Colonic mucosa (tissue), 4 donors: ENCODE measurements at regions of chr21 and their contacts with region 1.

Region 1: DNA sequence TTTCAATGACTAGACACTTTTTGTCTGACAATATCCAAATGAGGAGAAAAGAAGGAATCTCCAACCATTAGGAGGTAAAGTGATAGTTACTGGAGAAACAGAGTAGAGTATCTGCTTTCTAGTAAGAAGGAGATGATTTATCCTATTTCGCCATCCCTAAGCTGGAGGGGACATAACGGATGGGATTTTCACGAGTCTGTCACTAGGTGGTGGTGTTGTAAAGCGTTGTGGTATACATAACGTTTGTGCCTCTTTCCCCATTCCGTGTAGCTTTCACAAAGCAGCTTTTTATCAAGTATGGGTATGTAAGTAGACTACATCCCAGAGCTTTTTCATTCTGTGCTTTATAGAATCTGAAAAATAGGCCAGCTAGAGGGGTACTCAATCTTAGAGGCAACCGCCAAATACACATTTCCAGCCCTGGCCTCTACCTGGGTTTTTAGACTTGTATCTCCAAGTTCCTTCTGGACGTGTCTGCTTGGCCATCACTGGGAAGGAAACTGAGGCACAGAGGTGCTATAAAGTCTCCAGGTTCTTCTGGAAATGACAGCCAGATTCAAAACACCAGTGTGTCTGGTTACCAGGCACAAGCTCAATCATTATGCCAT is 33.3 kb upstream of the FAM3B start:
- DNase-seq: peak; percentile 64
- H3K4me3 ChIP-seq: no peak overlapping the region
- H3K27ac ChIP-seq: no peak overlapping the region
- H3K4me1 ChIP-seq: no peaks in the 10 kb centered on the region
- H3K27me3 ChIP-seq: no peaks in the 10 kb centered on the region
- CTCF ChIP-seq: peak; percentile 77

Region 2: DNA sequence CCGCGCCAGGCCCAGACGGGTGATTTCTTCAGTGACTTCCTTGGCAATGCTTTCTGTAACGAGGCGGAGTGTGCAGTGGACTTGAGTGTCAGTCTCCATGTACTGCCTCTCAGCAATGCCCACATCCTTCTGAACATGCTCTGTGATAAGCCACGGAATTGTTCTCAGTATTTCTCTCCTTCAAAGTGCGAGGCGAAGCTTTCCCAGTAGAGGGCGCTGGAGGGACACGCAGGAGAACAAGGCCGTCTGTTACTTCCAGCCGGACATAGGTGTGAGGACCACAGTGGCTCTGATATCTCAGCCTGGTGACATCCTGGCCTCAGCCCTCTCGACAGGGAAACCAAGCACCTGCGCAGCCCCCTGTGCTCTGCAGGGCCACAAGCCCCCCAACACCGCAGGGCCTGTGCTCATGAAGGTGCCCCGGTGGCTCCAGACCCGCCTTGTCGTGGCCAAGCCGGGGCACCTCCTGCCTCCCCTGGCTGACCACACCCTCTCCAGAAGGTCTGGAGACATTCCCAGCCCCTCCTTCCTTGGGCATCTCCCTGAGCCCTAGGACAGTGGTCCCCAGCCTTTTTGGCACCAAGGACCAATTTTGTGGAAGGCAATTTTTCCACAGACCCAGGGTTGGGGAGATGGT is 161.4 kb before region 1 on chr21:
- intact Hi-C with region 1: loop called (anchors 10 kb)
- DNase-seq: peak; percentile 93
- H3K4me3 ChIP-seq: no peak overlapping the region
- H3K27ac ChIP-seq: no peak overlapping the region
- H3K4me1 ChIP-seq: no peaks in the 10 kb centered on the region
- H3K27me3 ChIP-seq: peaks cover 4% of the 10 kb centered on the region
- CTCF ChIP-seq: peak; percentile 85

Region 3: DNA sequence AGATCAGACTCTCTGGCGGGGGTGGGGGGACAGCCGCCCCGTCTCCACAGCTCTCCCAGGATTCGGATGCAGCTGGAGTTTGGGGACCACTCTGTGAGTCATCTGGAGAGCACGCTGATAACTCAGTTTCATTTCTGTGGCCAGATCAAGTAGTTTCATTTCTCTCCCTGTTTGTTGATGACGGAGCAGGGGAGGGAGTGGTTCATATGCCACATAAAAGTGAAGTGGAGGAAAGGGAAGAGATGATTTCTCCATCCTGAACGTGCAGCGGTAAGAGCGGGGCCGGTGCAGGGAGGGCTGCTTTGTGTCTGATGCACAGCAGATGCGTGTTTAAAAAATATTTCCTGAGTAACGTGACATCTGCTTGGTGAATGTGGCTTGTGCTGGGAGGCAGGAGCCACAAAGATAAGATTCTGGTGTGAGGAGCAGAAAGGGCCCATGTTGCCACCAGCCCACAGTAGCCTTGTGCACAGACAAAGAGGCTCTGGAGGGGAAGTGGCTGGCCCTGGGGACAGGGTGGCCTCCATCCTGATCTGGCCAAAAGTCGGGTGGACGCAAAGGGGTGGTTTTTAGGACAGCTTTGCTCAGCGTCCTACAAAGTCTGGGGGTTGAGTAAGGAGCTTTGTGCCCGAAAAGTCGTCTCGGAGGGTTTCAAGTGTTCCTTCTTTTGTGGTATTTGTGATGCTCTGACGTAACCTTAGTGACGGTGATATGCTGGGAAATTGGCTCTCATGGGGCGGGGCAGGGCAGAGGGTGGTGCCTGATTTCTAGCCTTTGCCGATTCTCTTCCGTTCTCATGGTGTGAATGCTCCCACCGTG is 78.7 kb after region 1 on chr21 and contains the start of gene MX2:
- intact Hi-C with region 1: loop called (anchors 5 kb)
- DNase-seq: peak; percentile 61
- H3K4me3 ChIP-seq: peak within 1 kb of the TSS; percentile 27
- H3K27ac ChIP-seq: peak within 1 kb of the TSS; percentile 69
- H3K4me1 ChIP-seq: peaks cover 6% of the 10 kb centered on the region
- H3K27me3 ChIP-seq: no peaks in the 10 kb centered on the region
- CTCF ChIP-seq: no peak
- total RNA-seq, gene MX2: 2.0 to 2.5 TPM

Region 4: GRCh38 chr21:41396506-41397075 is 113.3 kb after region 1 on chr21:
- intact Hi-C with region 1: no loop called
- DNase-seq: peak; percentile 62
- H3K4me3 ChIP-seq: no peak overlapping the region
- H3K27ac ChIP-seq: no peak overlapping the region
- H3K4me1 ChIP-seq: peaks cover 4% of the 10 kb centered on the region
- H3K27me3 ChIP-seq: no peaks in the 10 kb centered on the region
- CTCF ChIP-seq: no peak

Region 5: GRCh38 chr21:41460578-41461527 is 177.5 kb after region 1 on chr21:
- intact Hi-C with region 1: loop called (anchors 2 kb)
- DNase-seq: peak; percentile 75
- H3K4me3 ChIP-seq: no peak overlapping the region
- H3K27ac ChIP-seq: no peak overlapping the region
- H3K4me1 ChIP-seq: no peaks in the 10 kb centered on the region
- H3K27me3 ChIP-seq: no peaks in the 10 kb centered on the region
- CTCF ChIP-seq: peak; percentile 81

Region 6: GRCh38 chr21:41601573-41602368 is 318.5 kb after region 1 on chr21:
- intact Hi-C with region 1: loop called (anchors 10 kb)
- DNase-seq: no peak
- H3K4me3 ChIP-seq: no peak overlapping the region
- H3K27ac ChIP-seq: no peak overlapping the region
- H3K4me1 ChIP-seq: no peaks in the 10 kb centered on the region
- H3K27me3 ChIP-seq: no peaks in the 10 kb centered on the region
- CTCF ChIP-seq: no peak

Region 7: GRCh38 chr21:41777951-41778874 is 494.9 kb after region 1 on chr21:
- intact Hi-C with region 1: loop called (anchors 10 kb)
- DNase-seq: peak; percentile 94
- H3K4me3 ChIP-seq: no peak overlapping the region
- H3K27ac ChIP-seq: no peak overlapping the region
- H3K4me1 ChIP-seq: peaks cover 6% of the 10 kb centered on the region
- H3K27me3 ChIP-seq: peaks cover 36% of the 10 kb centered on the region
- CTCF ChIP-seq: peak; percentile 94

Region 8: GRCh38 chr21:42021366-42022090 is 738.2 kb after region 1 on chr21:
- intact Hi-C with region 1: no loop called
- DNase-seq: no peak
- H3K4me3 ChIP-seq: no peak overlapping the region
- H3K27ac ChIP-seq: no peak overlapping the region
- H3K4me1 ChIP-seq: no peaks in the 10 kb centered on the region
- H3K27me3 ChIP-seq: no peaks in the 10 kb centered on the region
- CTCF ChIP-seq: no peak